ENCODE measurements at regions of chr2 and their contacts with region 1.

Region 1: GRCh38 chr2:7007846-7008741 is 90.9 kb downstream of the RNF144A start:
- DNase-seq: peak; percentile 81 to 91 (median 86)
- ATAC-seq: peak; percentile 96
- H3K4me3 ChIP-seq: no peak overlapping the region
- H3K27ac ChIP-seq: no peak overlapping the region
- H3K4me1 ChIP-seq: peaks cover 14 to 20% of the 10 kb centered on the region in 2 experiments
- H3K27me3 ChIP-seq: no peaks in the 10 kb centered on the region
- CTCF ChIP-seq: peak; percentile 63 to 83 (median 79)
- EP300 ChIP-seq: peak; percentile 62
- POLR2A ChIP-seq: no peak
- RAD21 ChIP-seq: peak; percentile 66 to 69

Region 2: DNA sequence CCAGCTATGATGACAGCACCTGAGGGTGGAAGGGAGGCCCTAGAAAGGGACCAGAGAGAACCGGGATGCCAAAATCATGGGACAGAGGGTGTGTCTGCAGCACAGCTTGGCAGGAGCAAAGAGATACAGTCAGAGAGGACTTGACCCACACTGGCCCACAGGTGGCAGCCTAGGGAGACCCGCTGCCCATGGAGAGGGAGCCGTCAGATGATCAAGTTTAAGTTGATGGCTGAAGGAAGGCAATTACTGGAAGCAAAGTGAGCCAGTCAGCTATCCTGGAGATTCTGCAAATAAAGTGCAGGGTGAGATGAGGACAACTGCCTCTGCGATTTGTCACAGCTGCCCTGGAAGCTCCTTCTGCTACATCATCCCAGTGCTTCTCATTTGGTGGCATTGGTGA is 216.4 kb before region 1 on chr2:
- CTCF ChIA-PET with region 1: no interaction called
- POLR2A ChIA-PET with region 1: no interaction called
- in situ Hi-C with region 1: no loop called
- intact Hi-C with region 1: no loop called
- DNase-seq: peak in 2 of 4 experiments; percentile 26 to 30
- ATAC-seq: peak; percentile 84
- H3K4me3 ChIP-seq: no peak overlapping the region
- H3K27ac ChIP-seq: no peak overlapping the region
- H3K4me1 ChIP-seq: no peaks in the 10 kb centered on the region
- H3K27me3 ChIP-seq: peaks cover 10 to 13% of the 10 kb centered on the region in 2 experiments; a peak in 4 of 5 replicates
- CTCF ChIP-seq: peak; percentile 40 to 53 (median 43); a peak in 5 of 6 replicates
- EP300 ChIP-seq: no peak
- POLR2A ChIP-seq: no peak
- RAD21 ChIP-seq: peak in 1 of 2 experiments; percentile 27; a peak in 2 of 4 replicates

Region 3: GRCh38 chr2:6917071-6917760 is 90.9 kb before region 1 on chr2 and contains the start of gene RNF144A:
- CTCF ChIA-PET with region 1: interaction called, 4 read pairs
- POLR2A ChIA-PET with region 1: interaction called, 3 read pairs
- in situ Hi-C with region 1: no loop called
- intact Hi-C with region 1: loop called (anchors 2 kb)
- DNase-seq: peak; percentile 75 to 93 (median 92)
- ATAC-seq: peak; percentile 88
- H3K4me3 ChIP-seq: peak within 1 kb of the TSS; percentile 61
- H3K27ac ChIP-seq: peak within 1 kb of the TSS; percentile 51; the same call in 1 of the 3 replicates
- H3K4me1 ChIP-seq: peaks cover 3 to 25% of the 10 kb centered on the region in 2 experiments; a peak in 4 of 5 replicates
- H3K27me3 ChIP-seq: 0 out of 5 replicates have a peak, but pooled peaks cover 0 to 4% of the 10 kb centered on the region in 2 experiments
- CTCF ChIP-seq: peak; percentile 25 to 54 (median 53); a peak in 4 of 6 replicates
- EP300 ChIP-seq: no peak
- POLR2A ChIP-seq: no peak
- RAD21 ChIP-seq: peak in 1 of 2 experiments; percentile 39; a peak in 2 of 4 replicates
- polyA plus RNA-seq, gene RNF144A: 0.96 to 1.4 TPM

Measured in K562 (cell line).